Activated naive CD4-positive, alpha-beta T cell treated with anti-CD3 and anti-CD28 coated beads for 36 hours (primary cell): ENCODE measurements at regions of chr1 and their contacts with region 1.

Region 1: GRCh38 chr1:200154069-200154767 is 126.7 kb downstream of the NR5A2 start:
- DNase-seq: peak; percentile 74
- H3K4me3 Mint-ChIP-seq: peak overlapping the region; percentile 10
- H3K27ac Mint-ChIP-seq: peak overlapping the region; percentile 87
- H3K4me1 Mint-ChIP-seq: peaks cover 45% of the 10 kb centered on the region
- H3K27me3 Mint-ChIP-seq: no peaks in the 10 kb centered on the region

Region 2: GRCh38 chr1:198601936-198602889 is 1552.0 kb before region 1 on chr1:
- CTCF ChIA-PET with region 1: no interaction called
- intact Hi-C with region 1: loop called (anchors 10 kb)
- DNase-seq: peak; percentile 87
- H3K4me3 Mint-ChIP-seq: peak overlapping the region; percentile 51
- H3K27ac Mint-ChIP-seq: peak overlapping the region; percentile 85
- H3K4me1 Mint-ChIP-seq: peaks cover 87% of the 10 kb centered on the region
- H3K27me3 Mint-ChIP-seq: no peaks in the 10 kb centered on the region

Region 3: GRCh38 chr1:200139661-200140250 is 14.5 kb before region 1 on chr1:
- CTCF ChIA-PET with region 1: interaction called, 3 read pairs
- intact Hi-C with region 1: loop called (anchors 1 kb)
- DNase-seq: peak; percentile 46
- H3K4me3 Mint-ChIP-seq: no peak overlapping the region
- H3K27ac Mint-ChIP-seq: no peak overlapping the region
- H3K4me1 Mint-ChIP-seq: no peaks in the 10 kb centered on the region
- H3K27me3 Mint-ChIP-seq: no peaks in the 10 kb centered on the region

Region 4: GRCh38 chr1:200302192-200302920 is 148.1 kb after region 1 on chr1:
- CTCF ChIA-PET with region 1: interaction called, 3 read pairs
- intact Hi-C with region 1: loop called (anchors 1 kb)
- DNase-seq: peak; percentile 71
- H3K4me3 Mint-ChIP-seq: peak overlapping the region; percentile 75
- H3K27ac Mint-ChIP-seq: no peak overlapping the region
- H3K4me1 Mint-ChIP-seq: peaks cover 14% of the 10 kb centered on the region
- H3K27me3 Mint-ChIP-seq: no peaks in the 10 kb centered on the region

Region 5: GRCh38 chr1:200448034-200448762 is 294.0 kb after region 1 on chr1:
- CTCF ChIA-PET with region 1: no interaction called
- intact Hi-C with region 1: loop called (anchors 1 kb)
- DNase-seq: peak; percentile 23
- H3K4me3 Mint-ChIP-seq: no peak overlapping the region
- H3K27ac Mint-ChIP-seq: peak overlapping the region; percentile 84
- H3K4me1 Mint-ChIP-seq: peaks cover 41% of the 10 kb centered on the region
- H3K27me3 Mint-ChIP-seq: peaks cover 7% of the 10 kb centered on the region

Region 6: DNA sequence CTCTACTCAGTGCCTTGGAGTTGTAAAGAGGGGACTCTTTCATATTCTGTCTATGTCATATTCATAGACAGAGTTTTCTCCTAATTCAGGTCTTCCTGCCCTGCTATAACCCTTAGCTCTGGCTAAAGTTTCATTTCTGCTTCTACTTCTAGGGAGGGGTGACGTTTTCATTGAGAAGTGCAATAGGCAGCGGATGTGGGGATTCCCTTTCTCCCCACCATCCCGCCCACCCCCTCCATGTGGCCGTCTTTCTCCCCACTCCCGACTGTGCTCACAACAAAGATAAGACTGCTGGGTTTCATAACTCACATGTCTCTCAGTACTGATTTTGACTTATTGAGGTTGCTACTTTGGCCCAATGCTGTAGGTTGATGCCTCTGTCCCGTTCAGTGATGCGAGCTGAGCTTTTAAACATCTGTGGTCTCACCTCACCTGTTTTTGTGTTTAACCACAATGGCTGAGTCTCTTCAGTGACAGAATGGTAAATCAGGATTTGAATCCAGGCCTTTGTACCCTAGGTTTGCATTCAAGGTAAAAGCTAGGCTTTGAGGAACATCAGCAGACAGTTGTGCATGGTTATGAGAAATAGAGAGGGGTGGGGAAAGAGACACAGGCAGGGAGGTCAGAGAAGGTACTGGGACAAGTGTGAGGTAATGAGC is 474.1 kb after region 1 on chr1:
- CTCF ChIA-PET with region 1: no interaction called
- intact Hi-C with region 1: loop called (anchors 5 kb)
- DNase-seq: peak; percentile 43
- H3K4me3 Mint-ChIP-seq: no peak overlapping the region
- H3K27ac Mint-ChIP-seq: no peak overlapping the region
- H3K4me1 Mint-ChIP-seq: peaks cover 32% of the 10 kb centered on the region
- H3K27me3 Mint-ChIP-seq: no peaks in the 10 kb centered on the region

Region 7: GRCh38 chr1:200907611-200908097 is 753.4 kb after region 1 on chr1:
- CTCF ChIA-PET with region 1: no interaction called
- intact Hi-C with region 1: no loop called
- DNase-seq: no peak
- H3K4me3 Mint-ChIP-seq: no peak overlapping the region
- H3K27ac Mint-ChIP-seq: no peak overlapping the region
- H3K4me1 Mint-ChIP-seq: peaks cover 12% of the 10 kb centered on the region
- H3K27me3 Mint-ChIP-seq: peaks cover 2% of the 10 kb centered on the region